ENCODE measurements at regions of chr12 and their contacts with region 1.

Region 1: GRCh38 chr12:22083167-22083566 is 37.1 kb downstream of the CMAS start:
- DNase-seq: no peak
- H3K4me3 ChIP-seq: no peak overlapping the region
- H3K27ac ChIP-seq: no peak overlapping the region
- H3K4me1 ChIP-seq: no peaks in the 10 kb centered on the region
- H3K27me3 ChIP-seq: no peaks in the 10 kb centered on the region
- CTCF ChIP-seq: peak; percentile 25 to 43 (median 39)
- EP300 ChIP-seq: no peak
- POLR2A ChIP-seq: no peak

Region 2: DNA sequence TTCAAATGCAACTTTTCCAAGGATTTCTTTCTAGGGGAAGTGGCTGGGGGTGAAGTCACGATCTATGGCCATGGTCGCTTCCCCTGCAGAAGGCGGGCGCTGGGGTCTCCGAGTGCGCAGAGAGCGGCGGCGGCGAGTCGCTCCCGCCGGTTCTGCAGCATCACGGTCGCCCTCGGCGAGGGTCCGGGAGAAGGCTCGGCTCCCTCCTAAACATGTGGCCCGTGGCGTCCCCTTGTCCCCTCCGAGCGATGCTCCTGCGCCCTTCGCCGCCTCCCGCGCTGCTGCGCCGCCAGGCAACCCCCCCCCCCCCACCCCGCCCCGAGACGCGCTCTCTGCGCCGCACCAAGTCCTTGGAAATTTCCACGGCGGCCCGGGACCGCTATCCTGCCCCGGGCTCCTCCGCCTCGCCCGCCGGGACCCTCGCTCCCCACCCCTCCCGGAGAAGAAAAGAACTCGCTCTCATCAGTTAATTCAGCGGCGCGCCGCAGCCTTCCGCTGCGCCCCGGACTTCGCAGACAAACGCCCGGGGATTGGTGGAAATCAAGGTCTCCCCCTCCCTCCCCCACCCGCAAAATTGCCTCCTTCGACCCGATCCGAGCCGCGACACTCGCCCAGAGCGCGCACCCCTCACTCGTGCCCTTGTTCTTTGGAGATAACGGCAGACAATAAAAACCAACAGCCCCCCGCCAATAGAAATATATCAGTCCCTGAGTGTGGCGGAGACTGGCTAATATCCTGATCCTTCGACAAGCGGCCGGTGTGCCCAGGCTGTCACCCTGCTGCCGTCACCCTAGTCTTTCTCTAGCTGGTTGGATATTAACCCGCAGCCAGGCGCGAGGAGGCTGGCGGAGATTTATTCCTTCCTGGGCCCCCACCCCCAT is 251.5 kb after region 1 on chr12 and contains the start of gene ST8SIA1:
- in situ Hi-C with region 1: no loop called
- intact Hi-C with region 1: loop called (anchors 10 kb)
- DNase-seq: peak; percentile 43
- H3K4me3 ChIP-seq: peak within 1 kb of the TSS; percentile 18 to 67 (median 47)
- H3K27ac ChIP-seq: peak within 1 kb of the TSS; percentile 72 to 76 (median 76)
- H3K4me1 ChIP-seq: peaks cover 0 to 21% (median 9%) of the 10 kb centered on the region in 4 donors
- H3K27me3 ChIP-seq: peaks cover 31% of the 10 kb centered on the region
- CTCF ChIP-seq: no peak
- EP300 ChIP-seq: no peak
- POLR2A ChIP-seq: no peak
- total RNA-seq, gene ST8SIA1: 1.4 to 4.5 (median 3.9) TPM

Region 3: GRCh38 chr12:22437031-22437780 is 354.0 kb after region 1 on chr12:
- in situ Hi-C with region 1: loop called in 2 of 4 experiments (anchors 10 kb)
- intact Hi-C with region 1: no loop called
- DNase-seq: no peak
- H3K4me3 ChIP-seq: no peak overlapping the region
- H3K27ac ChIP-seq: no peak overlapping the region
- H3K4me1 ChIP-seq: no peaks in the 10 kb centered on the region
- H3K27me3 ChIP-seq: no peaks in the 10 kb centered on the region
- CTCF ChIP-seq: no peak
- EP300 ChIP-seq: no peak
- POLR2A ChIP-seq: no peak

Region 4: GRCh38 chr12:22443379-22444316 is 360.5 kb after region 1 on chr12:
- in situ Hi-C with region 1: loop called in 2 of 4 experiments (anchors 10 kb)
- intact Hi-C with region 1: no loop called
- DNase-seq: peak; percentile 54
- H3K4me3 ChIP-seq: no peak overlapping the region
- H3K27ac ChIP-seq: no peak overlapping the region
- H3K4me1 ChIP-seq: no peaks in the 10 kb centered on the region
- H3K27me3 ChIP-seq: no peaks in the 10 kb centered on the region
- CTCF ChIP-seq: peak; percentile 66 to 79 (median 73)
- EP300 ChIP-seq: no peak
- POLR2A ChIP-seq: no peak

Region 5: DNA sequence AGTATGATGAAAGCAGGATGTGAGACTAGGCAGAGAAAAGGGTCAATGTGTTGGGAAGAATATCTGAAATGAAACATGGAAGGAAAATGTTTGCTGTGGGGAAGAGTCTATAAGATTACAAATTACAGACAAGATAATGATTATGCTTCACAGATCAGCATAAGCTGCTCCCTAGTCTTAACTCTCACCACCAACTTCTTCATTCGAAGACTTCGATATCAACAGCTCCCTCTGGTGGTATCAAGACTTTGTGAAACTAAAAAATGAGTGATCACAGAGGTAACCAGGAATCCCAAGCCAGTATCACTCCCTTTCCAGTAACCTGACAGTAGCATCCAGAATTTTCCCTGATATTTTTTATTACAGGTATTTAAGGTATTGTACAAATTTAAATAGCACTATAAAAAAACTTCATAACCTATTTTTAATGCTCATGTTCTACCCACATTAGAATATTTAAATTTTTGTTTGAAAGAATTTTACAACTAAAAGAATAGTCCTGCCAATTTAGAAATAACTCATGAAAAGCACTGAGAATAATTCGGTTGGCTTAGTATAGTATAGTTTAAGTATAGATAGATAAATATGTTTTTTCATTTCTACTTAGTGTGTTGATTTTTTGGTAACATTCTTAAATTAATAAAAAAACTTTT is 376.8 kb after region 1 on chr12:
- in situ Hi-C with region 1: loop called in 1 of 4 experiments (anchors 25 kb)
- intact Hi-C with region 1: loop called (anchors 5 kb)
- DNase-seq: no peak
- H3K4me3 ChIP-seq: no peak overlapping the region
- H3K27ac ChIP-seq: no peak overlapping the region
- H3K4me1 ChIP-seq: no peaks in the 10 kb centered on the region
- H3K27me3 ChIP-seq: no peaks in the 10 kb centered on the region
- CTCF ChIP-seq: peak; percentile 28 to 56 (median 51)
- EP300 ChIP-seq: no peak
- POLR2A ChIP-seq: no peak